H1 (cell line): ENCODE measurements at regions of chr19 and their contacts with region 1.

Region 1: GRCh38 chr19:37217855-37218591 is at the start of gene ZNF383:
- DNase-seq: peak; percentile 83 to 92
- H3K4me3 ChIP-seq: peak within 1 kb of the TSS; percentile 91 to 98 (median 96)
- H3K27ac ChIP-seq: peak within 1 kb of the TSS; percentile 99
- H3K4me1 ChIP-seq: no peaks in the 10 kb centered on the region
- H3K27me3 ChIP-seq: no peaks in the 10 kb centered on the region
- CTCF ChIP-seq: no peak
- EP300 ChIP-seq: no peak
- POLR2A ChIP-seq: peak; percentile 64 to 93
- RAD21 ChIP-seq: peak in 1 of 2 experiments; percentile 5; a peak in 1 of 4 replicates
- total RNA-seq, gene ZNF383: 3.7 and 3.9 TPM in 2 replicates

Region 2: GRCh38 chr19:37172368-37173366 is 45.4 kb before region 1 on chr19 and contains the start of gene ZNF585A:
- CTCF ChIA-PET with region 1: interaction called, 3 read pairs
- POLR2A ChIA-PET with region 1: interaction called, 10 read pairs
- DNase-seq: peak; percentile 58 to 92
- H3K4me3 ChIP-seq: peak within 1 kb of the TSS; percentile 87 to 97 (median 91)
- H3K27ac ChIP-seq: 0 out of 2 replicates have a peak within 1 kb of the TSS, but pooled peaks have one; percentile 51
- H3K4me1 ChIP-seq: no peaks in the 10 kb centered on the region
- H3K27me3 ChIP-seq: no peaks in the 10 kb centered on the region
- CTCF ChIP-seq: peak in 1 of 3 experiments; percentile 12; a peak in 2 of 4 replicates
- EP300 ChIP-seq: no peak
- POLR2A ChIP-seq: peak; percentile 26 to 59
- RAD21 ChIP-seq: peak; percentile 0 to 12; a peak in 1 of 4 replicates
- total RNA-seq, gene ZNF585A: 2.8 and 4.5 TPM in 2 replicates

Region 3: GRCh38 chr19:37309834-37310575 is 92.0 kb after region 1 on chr19:
- CTCF ChIA-PET with region 1: no interaction called
- POLR2A ChIA-PET with region 1: no interaction called
- DNase-seq: no peak
- H3K4me3 ChIP-seq: no peak overlapping the region
- H3K27ac ChIP-seq: no peak overlapping the region
- H3K4me1 ChIP-seq: peaks cover 0 to 2% (median 0%) of the 10 kb centered on the region in 4 experiments; a peak in 1 of 7 replicates
- H3K27me3 ChIP-seq: no peaks in the 10 kb centered on the region; a peak in 1 of 7 replicates
- CTCF ChIP-seq: peak; percentile 4 to 59 (median 31); a peak in 3 of 4 replicates
- EP300 ChIP-seq: no peak
- POLR2A ChIP-seq: no peak
- RAD21 ChIP-seq: peak; percentile 53 to 60